ENCODE measurements at regions of chr5 and their contacts with region 1.

Region 1: DNA sequence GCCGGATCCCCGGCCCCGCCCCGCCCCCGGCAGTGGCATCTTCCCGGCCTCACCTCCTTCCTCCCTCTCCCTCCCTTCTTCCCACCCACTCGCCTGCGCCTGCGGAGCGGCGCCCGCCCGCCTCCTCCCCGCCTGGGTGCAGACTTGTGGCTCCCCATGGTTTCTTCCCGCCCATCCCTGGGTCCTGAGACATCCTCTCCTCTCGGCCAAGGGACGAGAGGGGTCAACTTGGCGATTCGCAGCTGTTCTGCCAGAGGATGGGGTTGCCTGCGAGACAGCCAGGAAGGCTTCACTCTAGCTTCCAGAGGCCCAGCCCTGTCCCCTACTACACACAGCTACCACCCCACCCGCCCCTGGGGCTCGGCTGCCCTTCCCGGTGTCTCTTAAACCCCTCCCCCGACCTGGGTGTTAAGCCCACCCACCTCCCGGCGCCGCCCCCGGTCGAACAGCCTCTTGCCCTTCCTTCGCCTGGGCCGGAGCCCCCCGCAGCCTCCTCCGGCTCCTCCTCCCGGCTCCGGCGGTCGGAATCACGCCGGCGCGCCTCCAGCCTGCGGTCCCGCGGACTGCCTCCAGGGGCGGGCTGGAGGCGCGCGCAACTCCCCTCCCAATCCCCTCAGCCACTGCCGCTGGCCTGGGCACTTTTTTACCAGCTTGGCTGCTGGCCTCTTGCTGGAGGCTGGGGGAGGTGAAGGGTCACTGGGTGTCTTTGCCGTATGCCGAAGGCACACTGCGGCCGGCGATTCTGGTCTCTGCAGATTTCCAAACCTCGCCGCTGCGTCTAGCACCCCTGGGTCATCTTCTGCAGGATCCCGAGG is 1.9 kb downstream of the JADE2 start:
- DNase-seq: peak; percentile 78
- H3K4me3 Mint-ChIP-seq: peak overlapping the region; percentile 93
- H3K27ac Mint-ChIP-seq: peak overlapping the region; percentile 96
- H3K4me1 Mint-ChIP-seq: peaks cover 40% of the 10 kb centered on the region
- H3K27me3 Mint-ChIP-seq: peaks cover 17% of the 10 kb centered on the region

Region 2: DNA sequence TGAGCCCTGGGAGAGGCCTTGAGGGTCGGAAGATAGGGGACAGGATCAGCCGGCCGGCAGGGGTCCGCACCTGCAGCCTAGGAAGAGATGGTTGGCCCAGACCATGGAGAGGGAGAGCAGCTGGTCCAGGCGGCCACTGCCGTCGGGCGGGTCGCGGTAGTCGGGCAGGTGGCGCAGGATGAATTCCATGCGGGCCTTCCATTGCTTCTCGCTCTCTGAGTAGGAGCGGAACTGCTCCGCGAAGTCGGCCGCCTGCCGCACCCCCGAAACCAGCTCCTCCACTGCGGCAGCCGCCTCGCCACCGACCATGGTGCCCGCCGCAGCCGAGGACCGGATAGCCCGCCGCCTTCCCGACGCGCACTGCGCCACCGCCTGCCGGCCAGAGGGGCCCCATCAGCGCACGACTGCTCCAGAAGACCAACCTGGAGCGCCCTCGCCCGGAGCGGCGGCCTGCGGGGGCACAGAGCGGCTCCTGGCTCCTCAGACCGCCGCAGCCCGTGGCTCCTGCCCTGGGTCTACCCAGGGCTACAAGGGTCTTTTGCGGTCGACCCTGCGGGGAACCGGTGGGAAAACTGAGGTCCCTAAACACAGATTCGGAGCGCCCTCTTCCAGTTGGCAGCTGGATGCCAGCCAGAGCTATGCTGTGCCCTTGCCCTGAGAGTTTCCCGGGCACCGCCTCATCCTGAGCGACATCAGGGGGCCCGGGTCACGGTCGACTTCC is 115.6 kb before region 1 on chr5 and contains the start of gene CDKN2AIPNL:
- CTCF ChIA-PET with region 1: interaction called, 12 read pairs
- DNase-seq: peak; percentile 93
- H3K4me3 Mint-ChIP-seq: peak within 1 kb of the TSS; percentile 95
- H3K27ac Mint-ChIP-seq: peak within 1 kb of the TSS; percentile 82
- H3K4me1 Mint-ChIP-seq: peaks cover 34% of the 10 kb centered on the region
- H3K27me3 Mint-ChIP-seq: peaks cover 3% of the 10 kb centered on the region

Region 3: GRCh38 chr5:134543820-134544614 is 16.7 kb after region 1 on chr5:
- CTCF ChIA-PET with region 1: interaction called, 14 read pairs
- DNase-seq: peak; percentile 37
- H3K4me3 Mint-ChIP-seq: peak overlapping the region; percentile 21
- H3K27ac Mint-ChIP-seq: peak overlapping the region; percentile 84
- H3K4me1 Mint-ChIP-seq: peaks cover 30% of the 10 kb centered on the region
- H3K27me3 Mint-ChIP-seq: no peaks in the 10 kb centered on the region

Region 4: DNA sequence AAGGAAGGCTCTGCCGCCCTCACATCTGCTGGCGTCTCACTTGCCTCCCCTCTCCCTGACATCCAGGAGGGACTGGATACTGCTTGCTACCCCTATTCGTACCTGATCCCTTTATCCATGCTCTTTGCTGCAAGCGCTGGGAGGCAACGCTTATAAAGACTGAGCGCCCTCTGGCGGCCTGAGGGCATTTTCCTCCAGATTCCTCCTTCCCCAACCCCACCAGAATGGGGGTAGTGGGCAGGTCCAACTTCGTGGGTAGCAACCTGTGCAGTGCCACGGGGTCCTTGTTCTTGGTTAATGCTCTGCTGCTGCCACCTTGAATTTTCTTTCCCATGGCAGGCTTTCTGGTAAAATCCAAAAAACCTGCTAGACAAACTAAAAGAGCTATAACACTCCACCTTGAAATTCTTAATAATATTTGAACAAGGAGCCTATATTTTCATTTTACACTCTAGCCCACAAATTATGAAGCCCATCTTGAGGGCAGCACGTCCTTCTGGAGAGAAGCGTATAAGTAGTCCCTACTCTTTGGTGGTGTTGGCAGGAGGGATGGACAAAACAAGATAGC is 50.5 kb after region 1 on chr5:
- CTCF ChIA-PET with region 1: interaction called, 11 read pairs
- DNase-seq: peak; percentile 84
- H3K4me3 Mint-ChIP-seq: no peak overlapping the region
- H3K27ac Mint-ChIP-seq: no peak overlapping the region
- H3K4me1 Mint-ChIP-seq: no peaks in the 10 kb centered on the region
- H3K27me3 Mint-ChIP-seq: no peaks in the 10 kb centered on the region